ENCODE measurements at regions of chr3 and their contacts with region 1.

Region 1: DNA sequence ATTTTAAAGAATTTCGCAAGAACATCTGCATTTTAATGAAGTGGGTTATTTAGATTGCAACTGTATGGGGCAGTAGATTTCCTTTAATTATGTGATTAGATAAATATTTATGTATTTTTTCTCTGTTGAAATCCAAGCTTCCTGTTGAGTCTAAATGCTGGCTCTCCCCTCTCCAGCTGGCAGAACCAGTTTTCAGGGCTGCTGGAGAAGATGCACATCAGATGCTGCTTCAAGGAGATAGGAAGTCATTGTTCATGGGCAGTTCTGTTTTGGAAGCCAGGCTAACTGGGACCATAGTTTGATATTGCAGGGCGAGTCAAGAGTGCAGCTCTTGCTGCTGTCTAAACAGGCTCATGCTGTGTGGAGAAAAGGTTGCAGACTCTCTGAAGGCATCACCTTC is 97.4 kb downstream of the SLC9A9 start:
- DNase-seq: no peak
- H3K4me3 ChIP-seq: no peak overlapping the region
- H3K27ac ChIP-seq: no peak overlapping the region
- H3K4me1 ChIP-seq: no peaks in the 10 kb centered on the region
- H3K27me3 ChIP-seq: no peaks in the 10 kb centered on the region
- CTCF ChIP-seq: no peak

Region 2: DNA sequence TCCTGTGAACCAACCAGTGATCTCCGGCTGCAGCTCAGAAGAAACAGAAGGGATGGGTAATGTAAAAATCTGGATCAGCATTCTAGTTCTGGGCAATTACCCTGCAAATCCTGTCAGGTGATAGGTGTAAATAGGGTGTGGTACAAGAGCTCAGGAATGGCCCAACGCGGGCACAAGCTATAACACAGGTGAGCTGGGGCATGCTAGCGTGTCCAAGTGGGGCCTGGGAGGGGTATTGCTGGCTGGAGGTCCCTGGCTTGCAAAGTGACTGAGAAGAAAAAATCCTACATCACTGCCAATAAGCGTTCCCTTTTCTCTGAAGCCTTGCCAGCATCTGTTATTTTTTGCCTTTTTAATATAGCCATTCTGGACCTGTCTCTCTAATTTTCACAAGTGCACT is 641.0 kb before region 1 on chr3:
- CTCF ChIA-PET with region 1: no interaction called
- POLR2A ChIA-PET with region 1: interaction called, 16 read pairs
- intact Hi-C with region 1: no loop called
- DNase-seq: no peak
- H3K4me3 ChIP-seq: no peak overlapping the region
- H3K27ac ChIP-seq: no peak overlapping the region
- H3K4me1 ChIP-seq: no peaks in the 10 kb centered on the region
- H3K27me3 ChIP-seq: peaks cover 8% of the 10 kb centered on the region
- CTCF ChIP-seq: no peak

Region 3: DNA sequence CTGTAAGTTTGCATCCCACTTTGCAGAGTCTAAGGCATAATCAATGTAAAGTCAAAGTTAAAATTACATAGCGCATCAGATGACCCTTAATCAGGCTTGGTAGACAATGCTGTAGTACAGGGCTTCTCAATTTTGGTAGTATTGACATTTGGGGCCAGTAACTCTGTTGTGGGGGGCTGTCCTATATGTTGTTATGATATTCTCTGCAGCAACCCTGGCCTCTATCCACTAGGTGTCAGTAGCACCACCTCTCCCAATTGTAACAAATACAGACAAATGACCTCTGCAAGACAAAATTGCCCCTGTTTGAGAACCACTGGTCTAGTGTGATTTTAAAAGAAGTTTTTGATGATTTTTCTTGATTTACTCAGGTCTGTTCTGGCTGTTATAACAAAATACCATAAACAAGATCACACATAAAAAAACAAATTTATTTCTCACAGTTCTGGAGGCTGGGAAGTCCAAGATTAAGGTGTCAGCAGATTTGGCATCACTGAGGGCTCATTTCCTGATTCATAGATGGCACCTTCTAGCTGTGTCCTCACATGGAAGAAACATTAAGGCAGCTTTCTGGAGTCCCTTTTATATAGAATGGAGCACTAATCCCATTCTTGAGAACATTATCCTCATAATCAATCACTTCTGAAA is 135.1 kb after region 1 on chr3:
- CTCF ChIA-PET with region 1: no interaction called
- POLR2A ChIA-PET with region 1: no interaction called
- intact Hi-C with region 1: no loop called
- DNase-seq: no peak
- H3K4me3 ChIP-seq: no peak overlapping the region
- H3K27ac ChIP-seq: no peak overlapping the region
- H3K4me1 ChIP-seq: no peaks in the 10 kb centered on the region
- H3K27me3 ChIP-seq: no peaks in the 10 kb centered on the region
- CTCF ChIP-seq: peak; percentile 81

Measured in PC-9 (cell line).